ENCODE measurements at regions of chr1 and their contacts with region 1.

Region 1: GRCh38 chr1:89632657-89633247 is at the start of gene LRRC8C:
- DNase-seq: peak; percentile 88 to 92
- ATAC-seq: peak; percentile 88 to 96 (median 94)
- H3K4me3 ChIP-seq: peak within 1 kb of the TSS; percentile 57 to 99 (median 96)
- H3K27ac ChIP-seq: peak within 1 kb of the TSS; percentile 93 to 99 (median 98)
- H3K4me1 ChIP-seq: peaks cover 10 to 77% (median 57%) of the 10 kb centered on the region in 9 donors
- H3K27me3 ChIP-seq: no peaks in the 10 kb centered on the region
- CTCF ChIP-seq: peak; percentile 29 to 84 (median 65)
- total RNA-seq, gene LRRC8C: 5.6 to 12.3 (median 8.3) TPM

Region 2: DNA sequence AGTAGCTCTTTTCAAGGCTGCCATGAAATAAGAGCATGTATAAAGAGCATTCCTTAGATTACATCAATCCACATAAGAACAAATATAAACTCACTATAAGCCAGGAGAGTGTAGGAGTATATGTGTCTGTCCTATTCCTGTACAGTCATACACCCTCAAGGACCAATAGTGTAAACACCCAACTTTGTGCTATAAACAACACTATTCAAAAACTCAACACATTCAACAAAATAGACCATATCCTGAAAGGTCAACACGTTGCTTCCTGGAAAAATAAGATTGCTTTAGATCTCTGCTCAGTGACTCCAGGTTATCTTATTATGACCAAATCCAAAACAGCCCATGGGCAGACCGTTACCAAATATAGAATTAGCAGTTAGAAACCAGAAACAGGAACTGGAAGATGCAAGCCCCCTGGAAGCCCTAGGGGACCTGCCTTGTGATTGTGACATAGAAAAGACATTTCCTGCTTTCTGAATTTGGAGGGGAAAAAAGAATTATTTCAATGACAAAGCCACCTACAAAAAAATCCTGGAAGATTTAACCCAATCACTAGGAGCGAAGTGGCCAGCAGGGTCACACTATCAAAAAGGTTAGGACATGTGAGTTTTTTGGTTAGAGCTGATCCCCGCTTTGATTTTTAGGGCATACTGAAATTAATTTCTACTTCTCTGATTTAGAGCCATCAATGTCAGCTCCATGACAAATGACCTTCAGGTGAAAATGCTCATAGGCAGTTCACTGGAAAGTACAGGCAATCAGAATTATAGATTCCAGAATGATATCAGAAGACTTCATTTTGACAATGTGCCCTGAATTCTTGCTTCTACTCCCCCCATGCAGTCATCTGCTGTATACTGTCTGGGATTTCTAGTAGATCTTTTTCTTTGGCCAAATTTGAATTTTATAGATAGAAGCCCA is 60.1 kb after region 1 on chr1:
- intact Hi-C with region 1: loop called in 6 of 10 experiments (anchors 5 to 10 kb)
- DNase-seq: peak in 1 of 2 donors; percentile 61
- ATAC-seq: peak; percentile 73 to 91 (median 80)
- H3K4me3 ChIP-seq: no peak overlapping the region
- H3K27ac ChIP-seq: peak overlapping the region in 9 of 10 donors; percentile 14 to 77 (median 68)
- H3K4me1 ChIP-seq: peaks cover 2 to 77% (median 64%) of the 10 kb centered on the region in 9 donors
- H3K27me3 ChIP-seq: no peaks in the 10 kb centered on the region
- CTCF ChIP-seq: no peak

Region 3: GRCh38 chr1:89719502-89720306 is 87.0 kb after region 1 on chr1:
- intact Hi-C with region 1: loop called in 2 of 10 experiments (anchors 5 kb)
- DNase-seq: no peak
- ATAC-seq: peak in 2 of 8 donors; percentile 14 to 37
- H3K4me3 ChIP-seq: peak overlapping the region in 1 of 10 donors; percentile 5
- H3K27ac ChIP-seq: peak overlapping the region in 7 of 10 donors; percentile 18 to 86 (median 54)
- H3K4me1 ChIP-seq: peaks cover 9 to 68% (median 44%) of the 10 kb centered on the region in 9 donors
- H3K27me3 ChIP-seq: no peaks in the 10 kb centered on the region
- CTCF ChIP-seq: no peak